GM12878 (cell line): ENCODE measurements at regions of chr13 and their contacts with region 1.

Region 1: GRCh38 chr13:111202745-111203144 is 87.6 kb downstream of the ARHGEF7 start:
- DNase-seq: no peak
- ATAC-seq: peak; percentile 89
- H3K4me3 ChIP-seq: no peak overlapping the region
- H3K27ac ChIP-seq: peak overlapping the region; percentile 90
- H3K4me1 ChIP-seq: peaks cover 48% of the 10 kb centered on the region
- H3K27me3 ChIP-seq: no peaks in the 10 kb centered on the region
- CTCF ChIP-seq: no peak
- EP300 ChIP-seq: no peak
- POLR2A ChIP-seq: no peak
- RAD21 ChIP-seq: no peak

Region 2: GRCh38 chr13:111153279-111153976 is 49.3 kb before region 1 on chr13:
- CTCF ChIA-PET with region 1: interaction called, 4 read pairs
- POLR2A ChIA-PET with region 1: interaction called, 3 read pairs
- RAD21 ChIA-PET with region 1: interaction called, 7 read pairs
- SMC1A ChIA-PET with region 1: interaction called, 20 read pairs
- in situ Hi-C with region 1: no loop called
- intact Hi-C with region 1: loop called (anchors 5 kb)
- DNase-seq: no peak
- ATAC-seq: peak; percentile 85
- H3K4me3 ChIP-seq: peak overlapping the region; percentile 88
- H3K27ac ChIP-seq: peak overlapping the region; percentile 81
- H3K4me1 ChIP-seq: no peaks in the 10 kb centered on the region
- H3K27me3 ChIP-seq: no peaks in the 10 kb centered on the region
- CTCF ChIP-seq: peak; percentile 7 to 20 (median 7); a peak in 2 of 6 replicates
- EP300 ChIP-seq: no peak
- POLR2A ChIP-seq: peak; percentile 93
- RAD21 ChIP-seq: peak; percentile 39; the same call in 1 of the 2 replicates

Region 3: GRCh38 chr13:111165241-111166010 is 37.3 kb before region 1 on chr13:
- CTCF ChIA-PET with region 1: interaction called, 5 read pairs
- POLR2A ChIA-PET with region 1: interaction called, 3 read pairs
- RAD21 ChIA-PET with region 1: interaction called, 4 read pairs
- SMC1A ChIA-PET with region 1: interaction called, 5 read pairs
- in situ Hi-C with region 1: no loop called
- intact Hi-C with region 1: loop called (anchors 5 kb)
- DNase-seq: no peak
- ATAC-seq: peak; percentile 77
- H3K4me3 ChIP-seq: peak overlapping the region; percentile 36; the same call in 1 of the 2 replicates
- H3K27ac ChIP-seq: peak overlapping the region; percentile 66
- H3K4me1 ChIP-seq: peaks cover 53% of the 10 kb centered on the region
- H3K27me3 ChIP-seq: no peaks in the 10 kb centered on the region
- CTCF ChIP-seq: no peak
- EP300 ChIP-seq: no peak
- POLR2A ChIP-seq: no peak
- RAD21 ChIP-seq: no peak

Region 4: GRCh38 chr13:111184458-111185401 is 18.0 kb before region 1 on chr13:
- CTCF ChIA-PET with region 1: interaction called, 10 read pairs
- POLR2A ChIA-PET with region 1: interaction called, 4 read pairs
- RAD21 ChIA-PET with region 1: interaction called, 11 read pairs
- SMC1A ChIA-PET with region 1: interaction called, 99 read pairs
- in situ Hi-C with region 1: no loop called
- intact Hi-C with region 1: loop called (anchors 1 kb)
- DNase-seq: peak; percentile 93
- ATAC-seq: peak; percentile 91
- H3K4me3 ChIP-seq: peak overlapping the region; percentile 67
- H3K27ac ChIP-seq: peak overlapping the region; percentile 70
- H3K4me1 ChIP-seq: peaks cover 47% of the 10 kb centered on the region
- H3K27me3 ChIP-seq: no peaks in the 10 kb centered on the region
- CTCF ChIP-seq: no peak
- EP300 ChIP-seq: peak; percentile 59 to 77; a peak in 3 of 4 replicates
- POLR2A ChIP-seq: peak; percentile 58
- RAD21 ChIP-seq: no peak

Region 5: DNA sequence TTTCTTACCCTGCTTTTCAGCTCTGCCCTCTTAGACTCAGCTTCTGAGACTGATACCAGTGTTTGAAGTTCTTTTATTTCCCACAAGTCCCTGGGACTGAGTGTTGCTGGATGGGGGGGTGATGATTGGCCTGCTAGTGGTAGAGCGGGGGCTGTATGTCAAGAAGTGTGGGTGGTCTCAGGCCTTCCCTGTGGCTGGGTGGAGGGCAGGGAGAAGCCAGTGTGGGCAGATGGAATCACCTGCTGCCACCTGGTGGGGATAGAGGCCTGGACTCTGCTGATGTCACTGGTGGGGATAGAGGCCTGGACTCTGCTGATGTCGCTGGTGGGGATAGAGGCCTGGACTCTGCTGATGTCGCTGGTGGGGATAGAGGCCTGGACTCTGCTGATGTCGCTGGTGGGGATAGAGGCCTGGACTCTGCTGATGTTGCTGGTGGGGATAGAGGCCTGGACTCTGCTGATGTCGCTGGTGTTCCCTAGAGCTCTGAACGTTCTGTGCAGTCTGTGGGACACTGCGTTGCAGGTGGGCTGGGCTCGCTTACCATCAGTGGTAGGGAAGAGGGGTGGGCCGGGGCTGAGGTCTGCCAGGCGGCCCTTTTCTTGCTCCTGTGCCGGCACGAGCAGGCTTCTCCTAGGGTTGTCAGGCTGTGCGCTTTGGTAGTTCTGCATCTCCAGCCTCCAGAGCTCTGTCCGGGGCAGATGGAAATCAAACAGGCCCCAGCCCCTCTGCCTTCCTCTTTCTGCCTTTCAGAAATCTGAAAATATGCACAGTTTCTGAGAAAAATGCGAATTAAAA is 13.6 kb after region 1 on chr13:
- CTCF ChIA-PET with region 1: interaction called, 25 read pairs
- POLR2A ChIA-PET with region 1: interaction called, 3 read pairs
- RAD21 ChIA-PET with region 1: interaction called, 3 read pairs
- SMC1A ChIA-PET with region 1: interaction called, 7 read pairs
- in situ Hi-C with region 1: no loop called
- intact Hi-C with region 1: no loop called
- DNase-seq: no peak
- ATAC-seq: peak; percentile 91
- H3K4me3 ChIP-seq: no peak overlapping the region
- H3K27ac ChIP-seq: no peak overlapping the region
- H3K4me1 ChIP-seq: peaks cover 7% of the 10 kb centered on the region
- H3K27me3 ChIP-seq: no peaks in the 10 kb centered on the region
- CTCF ChIP-seq: peak; percentile 52 to 55 (median 53); a peak in 5 of 6 replicates
- EP300 ChIP-seq: no peak
- POLR2A ChIP-seq: no peak
- RAD21 ChIP-seq: peak; percentile 52; the same call in 1 of the 2 replicates